Sciatic nerve (tissue), 2 donors: ENCODE measurements at regions of chr15 and their contacts with region 1.

Region 1: DNA sequence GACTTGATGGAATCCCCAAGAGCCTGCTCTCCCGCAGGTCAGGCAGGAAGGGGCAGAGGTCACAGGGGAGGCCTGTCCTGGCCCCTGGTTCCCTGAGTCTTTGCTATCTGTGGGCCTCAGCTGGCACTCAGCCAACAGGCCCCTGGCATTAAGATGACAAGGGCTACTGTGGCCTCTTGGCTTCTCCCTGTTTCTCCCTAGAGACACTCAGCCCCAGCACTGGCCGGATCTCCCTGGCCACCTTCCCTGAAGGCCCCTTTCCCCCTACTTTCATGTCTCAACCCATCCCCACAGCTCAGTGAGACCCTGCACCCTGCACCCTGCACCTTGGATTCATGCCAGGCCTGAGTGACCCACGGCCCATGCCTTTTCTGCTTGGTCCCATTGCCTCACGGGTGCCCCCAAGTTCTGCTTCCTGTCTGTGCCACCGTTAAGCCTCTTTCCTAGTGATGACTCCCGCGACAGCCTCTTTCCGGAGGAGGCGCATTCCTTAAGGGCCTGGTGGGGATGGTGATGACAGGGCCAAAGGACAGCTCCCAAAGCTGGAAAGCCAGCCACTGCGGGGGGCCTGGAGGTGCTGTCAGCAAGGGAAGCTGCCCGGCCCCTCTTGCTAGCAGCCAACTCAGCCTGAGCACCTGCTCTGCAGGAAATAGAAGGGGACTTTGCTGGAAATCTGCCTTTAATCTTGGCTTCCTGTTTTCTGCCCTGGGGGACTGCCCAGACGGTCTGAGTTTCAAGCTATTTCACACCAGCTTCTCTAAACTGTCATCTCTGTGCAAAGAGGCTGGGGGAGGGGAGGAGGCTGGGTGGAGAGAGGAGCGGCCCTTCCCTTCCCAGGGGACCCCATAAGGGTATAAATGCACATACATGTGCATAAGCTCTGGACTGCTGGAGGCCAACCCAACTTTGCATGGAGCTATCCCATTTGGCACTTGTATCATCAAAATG is 4.8 kb upstream of the CSK start:
- DNase-seq: no peak
- ATAC-seq: peak; percentile 35

Region 2: GRCh38 chr15:74808073-74808755 is 31.1 kb after region 1 on chr15:
- intact Hi-C with region 1: no loop called
- DNase-seq: no peak
- ATAC-seq: no peak

Region 3: DNA sequence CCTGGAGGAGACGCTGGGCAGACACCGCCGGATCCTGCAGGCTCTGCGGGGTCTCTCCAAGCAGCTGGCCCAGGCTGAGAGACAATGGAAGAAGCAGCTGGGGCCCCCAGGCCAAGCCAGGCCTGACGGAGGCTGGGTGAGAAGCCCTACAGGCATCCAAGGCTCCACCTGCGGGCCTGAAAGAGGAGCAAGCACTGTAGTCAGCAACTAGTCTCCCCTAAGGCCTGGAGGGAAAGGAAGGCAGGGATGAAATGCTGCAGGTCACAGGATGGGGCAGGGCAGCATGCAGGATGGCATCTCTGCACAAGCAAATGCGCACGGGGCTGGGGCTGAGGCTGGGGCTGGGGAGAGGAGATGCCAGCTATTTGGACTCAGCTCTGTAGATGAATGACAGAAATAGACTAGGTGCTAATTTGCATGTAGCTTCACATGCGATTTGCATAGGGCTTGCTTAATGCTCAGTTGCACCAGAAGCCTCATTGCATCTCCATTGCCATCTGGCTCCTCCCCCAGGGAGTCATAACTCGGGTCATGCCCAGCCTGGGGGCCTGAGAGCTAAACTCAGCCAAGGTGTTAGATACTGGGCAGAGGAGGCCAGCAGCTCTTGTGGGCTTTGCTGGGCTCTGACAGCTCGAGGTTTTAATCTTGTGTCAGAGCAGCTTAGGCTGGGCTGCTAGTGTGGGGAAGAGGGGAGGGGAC is 44.1 kb after region 1 on chr15:
- intact Hi-C with region 1: no loop called
- DNase-seq: no peak
- ATAC-seq: no peak

Region 4: DNA sequence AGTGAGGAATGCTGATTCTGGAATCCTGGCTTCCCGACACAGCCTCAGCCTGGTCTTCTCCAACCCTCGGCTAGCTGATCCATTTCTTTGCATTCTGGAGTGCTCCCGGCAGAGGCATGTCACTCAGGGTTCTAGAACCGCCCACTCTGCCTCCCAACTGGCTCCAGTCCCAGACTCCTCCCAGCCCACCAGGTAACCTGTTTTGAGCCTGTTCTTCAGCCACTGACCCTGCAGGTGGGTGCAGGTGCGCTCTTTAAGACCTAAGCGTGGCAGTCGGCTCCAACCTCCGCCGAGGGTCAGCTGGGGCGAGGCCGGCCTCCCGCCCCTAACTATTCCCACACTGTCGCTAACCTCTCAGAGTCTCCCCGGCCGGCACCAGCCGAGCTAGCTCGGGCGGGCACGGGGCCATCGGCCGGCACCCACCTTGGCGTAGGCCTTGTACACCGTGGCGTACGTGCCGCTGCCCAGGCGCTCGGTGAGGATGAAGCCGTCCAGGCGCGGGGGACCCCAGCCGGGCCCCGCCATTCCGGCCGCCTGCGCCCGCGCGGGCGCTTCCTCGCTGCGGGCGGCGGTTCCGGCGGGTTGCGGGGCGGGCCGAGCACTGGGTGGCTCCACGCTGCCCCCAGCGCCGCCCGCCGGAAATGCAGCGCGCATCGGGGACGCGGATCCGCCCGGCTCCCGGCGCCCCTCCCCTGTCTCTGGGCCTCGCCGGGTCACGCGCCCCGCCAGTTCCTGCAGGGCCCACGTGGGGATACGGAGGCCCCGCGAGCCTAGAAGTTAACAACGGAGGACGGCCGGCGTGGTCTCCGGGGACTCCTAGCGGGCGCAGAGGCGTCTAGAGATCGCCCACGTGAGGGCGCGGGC is 65.7 kb after region 1 on chr15 and contains the start of gene ULK3:
- intact Hi-C with region 1: loop called (anchors 10 kb)
- DNase-seq: peak; percentile 94
- ATAC-seq: peak; percentile 94
- total RNA-seq, gene ULK3: 26.5 TPM

Region 5: DNA sequence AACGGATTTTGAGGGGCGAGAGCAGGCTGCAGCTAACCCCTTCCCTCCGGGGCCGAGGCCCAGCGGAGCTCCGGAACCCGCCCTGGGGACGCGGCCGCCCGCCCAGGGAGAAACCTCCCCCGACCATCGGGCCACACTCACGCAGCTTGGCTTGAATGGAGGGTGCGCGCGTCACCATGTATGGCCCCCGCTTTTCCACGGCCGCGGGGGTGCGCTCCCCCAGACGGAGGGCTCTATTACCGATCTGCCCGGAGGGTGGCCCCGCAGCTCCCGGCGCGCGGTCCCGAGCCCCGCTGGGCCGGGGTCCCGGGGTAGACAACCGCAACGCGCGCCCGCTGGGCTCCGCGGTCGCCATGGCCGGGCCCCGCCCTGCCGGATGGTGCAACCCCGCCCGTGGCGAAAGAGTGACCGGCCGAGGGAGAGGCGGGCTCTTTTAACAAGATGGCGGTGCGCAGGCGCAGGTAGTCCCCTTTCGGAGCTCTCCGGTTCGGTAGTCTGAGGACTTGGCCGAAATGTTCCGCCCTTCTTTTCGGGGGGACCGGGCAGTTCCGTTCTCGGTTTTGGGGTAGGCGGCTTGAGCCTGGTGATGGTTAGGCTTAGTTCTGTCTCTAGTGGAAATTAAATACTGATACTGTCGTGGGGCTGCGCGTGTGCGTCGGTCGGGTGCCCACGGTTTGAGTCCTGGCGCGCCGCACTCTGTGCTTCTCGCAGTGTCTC is 129.5 kb after region 1 on chr15 and contains the start of gene FAM219B:
- intact Hi-C with region 1: loop called (anchors 10 kb)
- DNase-seq: peak; percentile 96
- ATAC-seq: peak; percentile 98
- total RNA-seq, gene FAM219B: 72.9 TPM

Region 6: DNA sequence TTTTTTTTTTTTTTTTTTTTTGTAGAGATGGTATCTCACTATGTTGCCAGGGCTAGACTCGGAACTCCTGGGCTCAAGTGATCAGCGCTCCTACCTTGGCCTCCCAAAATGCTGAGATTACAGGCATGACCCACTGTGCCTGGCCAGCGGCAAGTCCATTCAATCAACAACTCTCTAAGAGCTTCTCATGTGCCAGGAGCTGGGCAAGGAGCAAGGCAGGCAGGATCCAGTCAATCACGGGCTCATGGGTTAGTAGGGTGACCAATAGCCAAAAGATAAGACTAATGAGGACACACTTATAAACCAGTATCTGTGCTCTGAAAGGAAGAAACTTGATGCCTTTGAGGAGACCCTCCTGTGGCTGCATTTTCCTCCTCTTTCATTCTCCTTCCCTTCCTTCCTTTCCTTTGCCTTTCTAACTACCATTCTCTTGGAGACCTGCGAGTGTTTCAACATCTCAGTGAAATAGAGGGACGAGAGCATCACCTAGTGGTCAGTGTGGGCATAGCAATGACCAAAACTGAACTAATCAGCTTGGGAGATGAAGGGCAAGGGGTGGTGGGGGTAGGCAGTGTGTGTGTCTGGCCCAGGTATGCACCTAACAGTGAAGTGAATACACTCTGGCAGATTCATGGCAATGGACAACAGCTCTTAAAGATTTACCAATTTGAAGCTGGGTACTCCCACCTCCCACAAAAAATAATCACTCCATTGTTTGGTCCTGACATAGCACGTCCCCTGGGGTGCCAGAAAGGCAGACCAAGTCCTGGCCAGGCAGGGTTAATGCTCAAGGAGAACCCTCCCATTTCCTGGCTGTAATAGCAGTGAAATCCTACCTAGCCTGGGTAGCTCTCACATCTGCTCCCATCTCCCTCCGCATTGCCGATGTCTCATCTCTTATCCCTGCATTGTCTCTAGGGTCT is 173.2 kb after region 1 on chr15:
- intact Hi-C with region 1: loop called (anchors 5 kb)
- DNase-seq: peak; percentile 89
- ATAC-seq: peak; percentile 80